Testis (tissue), 5 donors: ENCODE measurements at regions of chr15 and their contacts with region 1.

Region 1: GRCh38 chr15:61227269-61227949 is 1.7 kb downstream of the RORA start:
- DNase-seq: peak; percentile 30
- H3K4me3 ChIP-seq: peak overlapping the region; percentile 62 to 77
- H3K27ac ChIP-seq: peak overlapping the region; percentile 14 to 79
- H3K4me1 ChIP-seq: peaks cover 5% of the 10 kb centered on the region
- H3K27me3 ChIP-seq: no peaks in the 10 kb centered on the region
- CTCF ChIP-seq: no peak
- POLR2A ChIP-seq: no peak

Region 2: DNA sequence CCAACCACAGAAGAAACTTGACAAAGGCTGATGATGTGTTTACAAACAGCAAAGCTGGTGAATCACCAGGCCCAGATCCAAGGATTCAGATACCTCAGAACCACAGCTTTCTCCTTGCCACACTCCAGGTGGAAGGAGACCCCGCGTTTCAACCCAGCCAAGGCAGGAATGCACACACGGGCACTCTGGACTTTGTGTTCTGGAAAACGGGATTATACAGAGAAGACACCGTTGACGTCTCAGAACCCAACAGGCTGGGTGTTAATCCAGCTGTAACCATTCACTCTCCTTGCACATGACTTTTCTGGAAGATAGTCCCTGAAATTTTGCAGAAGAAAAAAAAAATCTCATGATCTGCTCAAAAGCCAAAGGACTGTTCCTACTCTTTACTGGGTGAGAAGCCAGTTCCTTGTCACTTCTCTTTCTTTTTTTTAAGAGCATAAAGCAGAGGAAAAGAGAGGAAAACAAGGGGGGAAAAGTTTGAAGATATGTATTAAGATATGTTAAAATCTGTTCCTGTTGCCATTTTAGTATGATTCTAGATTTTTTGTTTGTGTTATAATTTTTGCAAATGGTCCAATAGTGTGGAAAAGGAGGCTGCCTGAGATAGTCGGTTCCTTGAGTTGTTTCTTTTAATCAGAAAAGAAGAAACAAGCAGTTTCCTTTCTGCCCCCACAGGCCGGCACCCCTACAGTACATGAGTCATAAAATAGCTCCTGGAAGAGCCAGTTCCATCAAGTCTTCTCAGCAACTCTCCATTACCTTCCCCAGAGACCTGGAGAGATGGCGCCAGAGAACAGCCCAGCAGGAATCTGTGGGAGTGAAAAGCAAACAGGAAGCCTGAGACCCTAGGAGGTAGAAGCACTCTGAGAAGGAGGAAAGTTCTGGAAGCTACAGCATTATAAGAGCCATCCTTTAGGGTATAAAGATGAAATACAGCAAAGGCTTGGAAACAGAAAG is 71.4 kb before region 1 on chr15:
- intact Hi-C with region 1: loop called (anchors 5 kb)
- DNase-seq: peak; percentile 67
- H3K4me3 ChIP-seq: no peak overlapping the region
- H3K27ac ChIP-seq: peak overlapping the region; percentile 35 to 79
- H3K4me1 ChIP-seq: peaks cover 4% of the 10 kb centered on the region
- H3K27me3 ChIP-seq: no peaks in the 10 kb centered on the region
- CTCF ChIP-seq: no peak
- POLR2A ChIP-seq: no peak

Region 3: GRCh38 chr15:61621146-61621545 is 393.7 kb after region 1 on chr15:
- intact Hi-C with region 1: no loop called
- DNase-seq: peak; percentile 63
- H3K4me3 ChIP-seq: no peak overlapping the region
- H3K27ac ChIP-seq: no peak overlapping the region
- H3K4me1 ChIP-seq: no peaks in the 10 kb centered on the region
- H3K27me3 ChIP-seq: no peaks in the 10 kb centered on the region
- CTCF ChIP-seq: peak; percentile 31 to 48 (median 44)
- POLR2A ChIP-seq: no peak